H1 (cell line): ENCODE measurements at regions of chr7 and their contacts with region 1.

Region 1: DNA sequence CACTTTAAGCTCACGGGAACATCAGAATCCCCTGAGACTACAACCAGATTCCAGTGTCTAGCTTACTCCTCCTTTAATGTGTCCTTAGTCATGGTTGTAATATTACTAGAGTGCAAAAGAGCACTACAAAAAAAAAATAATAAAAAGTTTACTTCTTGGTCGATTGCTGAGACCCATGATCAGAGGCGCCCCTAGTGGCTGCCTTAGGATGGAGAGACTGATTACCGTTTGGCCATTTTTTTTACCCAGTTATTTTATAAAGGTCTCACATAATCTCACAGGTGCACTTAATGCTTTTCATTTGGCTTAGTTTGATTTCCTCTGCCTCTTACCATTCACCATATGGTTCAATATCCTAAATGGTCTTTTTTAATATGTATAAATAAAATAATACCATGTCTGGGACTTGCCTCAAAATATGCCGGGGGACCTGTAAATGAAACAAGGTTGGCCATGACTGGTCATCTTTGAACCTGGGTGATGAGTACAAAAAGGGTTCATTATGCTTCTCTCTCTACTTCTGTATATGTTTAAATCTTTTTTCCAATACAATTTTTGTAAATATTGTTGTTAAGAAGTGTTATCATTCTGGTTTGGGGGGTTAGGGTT is 331.5 kb upstream of the NFE2L3 start:
- DNase-seq: no peak
- H3K4me3 ChIP-seq: no peak overlapping the region
- H3K27ac ChIP-seq: no peak overlapping the region
- H3K4me1 ChIP-seq: no peaks in the 10 kb centered on the region
- H3K27me3 ChIP-seq: no peaks in the 10 kb centered on the region
- CTCF ChIP-seq: peak; percentile 25 to 61 (median 50)
- EP300 ChIP-seq: no peak
- POLR2A ChIP-seq: no peak
- RAD21 ChIP-seq: peak; percentile 38 to 54; a peak in 3 of 4 replicates

Region 2: GRCh38 chr7:25632616-25633015 is 187.9 kb before region 1 on chr7:
- CTCF ChIA-PET with region 1: no interaction called
- POLR2A ChIA-PET with region 1: no interaction called
- DNase-seq: no peak
- H3K4me3 ChIP-seq: no peak overlapping the region
- H3K27ac ChIP-seq: no peak overlapping the region
- H3K4me1 ChIP-seq: peaks cover 0 to 6% (median 4%) of the 10 kb centered on the region in 4 experiments; a peak in 4 of 7 replicates
- H3K27me3 ChIP-seq: no peaks in the 10 kb centered on the region
- CTCF ChIP-seq: no peak
- EP300 ChIP-seq: no peak
- POLR2A ChIP-seq: no peak
- RAD21 ChIP-seq: no peak

Region 3: DNA sequence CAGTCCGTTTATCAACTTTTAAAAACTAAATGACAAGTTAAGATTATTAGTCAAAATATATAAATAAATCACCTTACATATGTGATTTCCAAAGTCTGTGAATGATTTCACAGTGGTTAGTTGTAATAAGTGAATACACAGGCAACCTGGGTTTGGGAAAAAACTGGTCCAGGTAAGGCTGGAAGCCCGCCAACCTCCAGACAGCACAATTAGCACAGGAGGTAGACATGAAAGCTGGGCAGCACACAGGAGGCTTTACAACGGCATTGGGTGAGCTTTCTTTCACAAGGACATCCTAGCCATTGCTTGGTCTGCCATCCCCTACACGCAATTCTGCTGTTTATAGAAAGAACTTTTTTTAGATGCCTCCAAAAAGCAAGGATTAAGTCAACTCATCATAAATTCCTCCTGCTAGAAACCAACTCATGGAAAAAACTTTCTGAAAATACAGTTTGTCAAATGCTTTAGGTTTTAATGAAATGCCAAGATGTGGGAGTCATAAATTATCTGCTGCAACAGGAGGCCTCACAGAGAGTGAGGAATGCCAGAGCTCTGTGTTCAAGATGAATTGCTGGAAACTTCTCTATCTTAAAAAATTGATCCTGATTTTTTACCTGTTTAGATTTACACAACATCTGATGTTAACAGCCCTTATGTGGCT is 15.4 kb before region 1 on chr7:
- CTCF ChIA-PET with region 1: interaction called, 55 read pairs
- POLR2A ChIA-PET with region 1: interaction called, 3 read pairs
- DNase-seq: no peak
- H3K4me3 ChIP-seq: no peak overlapping the region
- H3K27ac ChIP-seq: no peak overlapping the region
- H3K4me1 ChIP-seq: no peaks in the 10 kb centered on the region
- H3K27me3 ChIP-seq: no peaks in the 10 kb centered on the region
- CTCF ChIP-seq: no peak
- EP300 ChIP-seq: no peak
- POLR2A ChIP-seq: no peak
- RAD21 ChIP-seq: no peak

Region 4: DNA sequence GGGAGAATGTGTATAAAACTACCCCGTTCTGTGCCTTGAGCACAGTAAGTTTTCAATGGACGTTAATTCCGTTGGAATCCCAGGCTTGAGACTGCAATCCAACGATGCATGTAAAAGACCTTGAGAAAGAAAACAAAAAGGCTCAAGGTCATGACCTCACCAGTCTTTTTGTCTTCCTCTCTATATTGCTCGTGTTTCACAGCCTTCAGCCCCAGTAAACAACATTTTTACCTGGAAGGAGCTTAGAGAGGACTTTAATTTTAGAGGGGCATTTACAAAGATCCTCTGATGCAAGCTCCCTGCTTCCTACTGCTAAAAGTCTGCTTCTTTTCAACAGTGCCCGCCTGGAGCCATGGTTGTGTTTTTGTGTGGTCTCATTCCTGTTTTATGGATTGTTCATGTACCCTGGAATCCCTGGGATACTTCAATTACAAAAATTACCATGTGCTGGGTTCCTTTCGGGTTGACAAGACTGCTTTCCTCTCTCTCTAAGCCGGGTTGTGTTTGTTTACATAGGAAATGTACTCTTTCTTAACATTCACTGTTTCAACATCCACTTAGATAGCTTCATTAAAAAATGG is 11.4 kb after region 1 on chr7:
- CTCF ChIA-PET with region 1: interaction called, 15 read pairs
- POLR2A ChIA-PET with region 1: no interaction called
- DNase-seq: no peak
- H3K4me3 ChIP-seq: no peak overlapping the region
- H3K27ac ChIP-seq: no peak overlapping the region
- H3K4me1 ChIP-seq: peaks cover 3 to 10% (median 5%) of the 10 kb centered on the region in 4 experiments; a peak in 5 of 7 replicates
- H3K27me3 ChIP-seq: no peaks in the 10 kb centered on the region
- CTCF ChIP-seq: no peak
- EP300 ChIP-seq: no peak
- POLR2A ChIP-seq: no peak
- RAD21 ChIP-seq: no peak

Region 5: GRCh38 chr7:25839084-25839769 is 18.7 kb after region 1 on chr7:
- CTCF ChIA-PET with region 1: interaction called, 13 read pairs
- POLR2A ChIA-PET with region 1: no interaction called
- DNase-seq: no peak
- H3K4me3 ChIP-seq: no peak overlapping the region
- H3K27ac ChIP-seq: no peak overlapping the region
- H3K4me1 ChIP-seq: no peaks in the 10 kb centered on the region; a peak in 1 of 7 replicates
- H3K27me3 ChIP-seq: no peaks in the 10 kb centered on the region
- CTCF ChIP-seq: peak in 2 of 3 experiments; percentile 36 to 59; a peak in 2 of 4 replicates
- EP300 ChIP-seq: no peak
- POLR2A ChIP-seq: no peak
- RAD21 ChIP-seq: peak; percentile 31 to 37; a peak in 3 of 4 replicates